BJ (cell line): ENCODE measurements at regions of chr4 and their contacts with region 1.

Region 1: DNA sequence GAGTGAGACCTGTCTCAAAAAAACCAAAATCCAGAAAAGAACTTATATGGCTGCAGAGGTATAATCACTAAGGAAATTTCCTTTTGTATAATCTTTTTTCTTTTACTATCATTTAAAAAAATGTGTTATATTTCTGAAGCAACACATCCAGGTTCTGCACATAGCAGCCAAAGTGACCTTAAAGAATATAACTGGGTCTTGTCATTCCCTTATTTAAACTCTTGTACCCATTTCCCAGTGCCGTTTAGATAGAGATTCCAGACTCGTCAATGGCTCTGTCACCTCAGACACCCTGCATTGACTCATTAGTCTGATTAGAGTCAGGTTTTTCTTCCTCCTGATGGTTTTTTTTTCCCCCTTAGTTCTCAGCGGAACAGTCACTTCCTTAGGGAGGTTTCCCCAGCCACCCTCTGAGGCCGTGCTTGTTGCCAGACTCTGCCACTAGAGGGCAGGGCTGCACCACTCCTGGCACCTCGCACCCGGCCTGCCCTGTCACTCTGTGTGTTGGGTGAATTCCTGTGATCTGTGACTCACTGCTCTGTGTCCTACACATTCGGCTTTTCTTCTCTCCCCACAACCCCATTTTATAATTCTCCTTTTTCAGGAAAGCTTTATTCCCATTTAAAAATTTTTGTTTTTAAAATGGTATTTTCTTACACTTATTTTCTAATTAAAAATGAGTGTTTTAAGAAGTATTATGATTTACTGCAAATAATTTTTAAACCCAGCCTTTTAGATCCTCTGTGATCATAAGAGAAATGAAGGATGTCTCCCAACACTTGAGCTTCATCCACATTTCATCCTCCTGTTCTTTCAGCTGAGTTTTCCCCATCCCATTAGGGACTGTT is 32.1 kb downstream of the HTT start:
- DNase-seq: peak; percentile 52
- H3K4me3 ChIP-seq: no peak overlapping the region
- H3K27me3 ChIP-seq: no peaks in the 10 kb centered on the region
- CTCF ChIP-seq: peak; percentile 98

Region 2: GRCh38 chr4:3122081-3122563 is 15.6 kb after region 1 on chr4:
- CTCF ChIA-PET with region 1: interaction called, 67 read pairs
- POLR2A ChIA-PET with region 1: no interaction called
- DNase-seq: no peak
- H3K4me3 ChIP-seq: no peak overlapping the region
- H3K27me3 ChIP-seq: no peaks in the 10 kb centered on the region
- CTCF ChIP-seq: no peak